Heart right ventricle (tissue), 16 donors: ENCODE measurements at regions of chr1 and their contacts with region 1.

Region 1: DNA sequence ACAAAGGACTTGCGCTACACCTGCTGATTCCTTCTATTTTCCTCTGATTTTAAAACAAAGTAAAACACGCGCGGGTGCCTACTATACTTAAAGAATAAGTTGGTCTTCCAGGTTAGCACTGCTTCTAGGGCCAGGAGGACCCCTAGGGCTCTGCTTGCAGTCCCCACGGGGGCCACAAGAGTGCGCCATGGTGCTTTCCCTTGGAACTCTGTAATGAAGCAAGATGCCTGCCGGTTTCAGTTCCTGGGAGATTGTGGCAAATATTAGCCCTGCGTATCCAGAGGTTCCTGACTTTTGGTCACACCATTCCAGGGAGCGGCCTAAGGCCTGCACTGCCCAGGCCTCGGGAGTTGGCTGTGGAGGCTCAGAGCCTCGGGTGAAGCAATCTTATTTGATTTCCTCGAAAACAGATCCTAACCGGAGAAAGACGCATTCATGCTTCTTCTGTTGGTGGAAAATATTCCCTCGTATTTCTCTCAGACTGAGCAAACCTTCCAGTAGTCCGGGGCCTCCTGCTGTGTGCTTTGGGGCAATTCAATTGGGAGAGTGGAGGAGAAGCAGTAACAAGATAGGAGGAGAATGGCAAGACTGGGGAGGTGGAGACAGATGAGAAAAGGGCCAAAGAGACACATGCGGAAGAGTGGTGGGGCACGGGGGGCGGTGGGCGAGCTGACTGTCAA is 25.3 kb downstream of the ADAM30 start:
- DNase-seq: peak; percentile 69 to 82
- ATAC-seq: peak; percentile 61 to 83 (median 74)
- H3K4me3 ChIP-seq: peak overlapping the region in 4 of 10 donors; percentile 25 to 36 (median 30)
- H3K27ac ChIP-seq: no peak overlapping the region
- H3K4me1 ChIP-seq: peaks cover 0 to 15% (median 6%) of the 10 kb centered on the region in 9 donors
- H3K27me3 ChIP-seq: peaks cover 0 to 5% (median 0%) of the 10 kb centered on the region in 7 donors
- CTCF ChIP-seq: peak; percentile 70 to 97 (median 84)

Region 2: GRCh38 chr1:119711804-119712341 is 159.2 kb before region 1 on chr1 and contains the start of gene PHGDH:
- intact Hi-C with region 1: no loop called
- DNase-seq: peak; percentile 50 to 56
- ATAC-seq: peak; percentile 66 to 85 (median 78)
- H3K4me3 ChIP-seq: peak within 1 kb of the TSS; percentile 42 to 65 (median 60)
- H3K27ac ChIP-seq: peak within 1 kb of the TSS in 8 of 10 donors; percentile 44 to 77 (median 62)
- H3K4me1 ChIP-seq: peaks cover 0 to 26% (median 16%) of the 10 kb centered on the region in 9 donors
- H3K27me3 ChIP-seq: peaks cover 0 to 28% (median 16%) of the 10 kb centered on the region in 7 donors
- CTCF ChIP-seq: no peak
- total RNA-seq, gene PHGDH: 3.8 to 8.9 (median 5.0) TPM

Region 3: GRCh38 chr1:119954476-119955422 is 83.7 kb after region 1 on chr1:
- intact Hi-C with region 1: loop called in 1 of 10 experiments (anchors 5 kb)
- DNase-seq: no peak
- ATAC-seq: peak in 4 of 8 donors; percentile 39 to 61 (median 53)
- H3K4me3 ChIP-seq: no peak overlapping the region
- H3K27ac ChIP-seq: peak overlapping the region in 1 of 10 donors; percentile 6
- H3K4me1 ChIP-seq: peaks cover 0 to 12% (median 7%) of the 10 kb centered on the region in 9 donors
- H3K27me3 ChIP-seq: no peaks in the 10 kb centered on the region
- CTCF ChIP-seq: no peak